Esophagus muscularis mucosa (tissue), 4 donors: ENCODE measurements at regions of chr12 and their contacts with region 1.

Region 1: GRCh38 chr12:51238510-51239334 is at the start of gene DAZAP2:
- DNase-seq: peak; percentile 99
- H3K4me3 ChIP-seq: peak within 1 kb of the TSS; percentile 74 to 96 (median 91)
- H3K27ac ChIP-seq: peak within 1 kb of the TSS; percentile 94 to 100 (median 99)
- H3K4me1 ChIP-seq: peaks cover 31 to 44% (median 40%) of the 10 kb centered on the region in 4 donors
- H3K27me3 ChIP-seq: no peaks in the 10 kb centered on the region
- CTCF ChIP-seq: peak in 2 of 3 experiments; percentile 12 to 42
- EP300 ChIP-seq: no peak
- POLR2A ChIP-seq: peak; percentile 94
- total RNA-seq, gene DAZAP2: 247 to 451 (median 356) TPM

Region 2: GRCh38 chr12:50862316-50862715 is 376.4 kb before region 1 on chr12:
- intact Hi-C with region 1: no loop called
- DNase-seq: no peak
- H3K4me3 ChIP-seq: no peak overlapping the region
- H3K27ac ChIP-seq: no peak overlapping the region
- H3K4me1 ChIP-seq: no peaks in the 10 kb centered on the region
- H3K27me3 ChIP-seq: no peaks in the 10 kb centered on the region
- CTCF ChIP-seq: no peak
- EP300 ChIP-seq: no peak
- POLR2A ChIP-seq: no peak

Region 3: DNA sequence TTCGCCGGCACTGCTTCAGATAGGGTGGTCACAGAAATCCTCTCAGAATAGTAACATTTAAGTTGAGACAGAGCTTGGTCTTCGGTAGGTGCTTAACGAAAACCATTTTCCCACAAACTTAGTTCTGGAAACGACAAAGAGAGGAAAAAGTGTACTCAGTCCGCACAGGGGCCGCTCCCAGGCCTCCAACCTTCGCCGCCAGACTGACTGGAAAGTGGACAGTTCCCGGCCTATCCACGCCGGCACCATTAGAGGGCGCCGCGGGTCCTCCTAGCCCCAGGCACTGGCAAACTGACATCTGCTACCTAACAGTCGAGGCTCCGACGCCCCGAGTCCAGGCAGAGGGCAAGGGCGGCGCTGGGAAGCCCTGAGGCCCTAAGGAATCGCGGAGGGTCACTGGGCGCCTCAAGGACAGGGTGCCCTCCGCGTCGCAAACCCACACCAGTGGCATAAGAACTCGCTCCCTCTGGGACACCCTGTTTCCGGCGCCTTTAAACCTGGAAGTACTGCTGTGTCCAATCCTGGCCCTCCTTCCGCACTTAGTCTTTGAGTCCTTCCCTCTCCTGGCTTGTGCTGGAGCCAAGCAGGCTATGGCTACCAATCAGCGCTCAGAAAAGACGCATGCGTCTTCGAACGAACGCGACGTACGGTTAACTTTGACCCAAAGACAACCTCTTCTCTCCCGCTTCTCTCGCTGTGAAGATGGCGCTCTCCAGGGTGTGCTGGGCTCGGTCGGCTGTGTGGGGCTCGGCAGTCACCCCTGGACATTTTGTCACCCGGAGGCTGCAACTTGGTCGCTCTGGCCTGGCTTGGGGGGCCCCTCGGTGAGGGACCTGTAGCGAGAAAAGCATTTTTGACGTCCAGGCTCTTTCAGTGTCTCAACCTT is 190.8 kb before region 1 on chr12 and contains the start of gene LETMD1:
- intact Hi-C with region 1: loop called (anchors 5 kb)
- DNase-seq: peak; percentile 98
- H3K4me3 ChIP-seq: peak within 1 kb of the TSS; percentile 64 to 78 (median 76)
- H3K27ac ChIP-seq: peak within 1 kb of the TSS; percentile 91 to 97 (median 93)
- H3K4me1 ChIP-seq: peaks cover 18 to 30% (median 26%) of the 10 kb centered on the region in 4 donors
- H3K27me3 ChIP-seq: no peaks in the 10 kb centered on the region
- CTCF ChIP-seq: peak; percentile 93 to 95 (median 94)
- EP300 ChIP-seq: no peak
- POLR2A ChIP-seq: peak; percentile 28
- total RNA-seq, gene LETMD1: 35.6 to 43.2 (median 42.1) TPM

Region 4: GRCh38 chr12:51103977-51104376 is 134.7 kb before region 1 on chr12:
- intact Hi-C with region 1: no loop called
- DNase-seq: no peak
- H3K4me3 ChIP-seq: no peak overlapping the region
- H3K27ac ChIP-seq: no peak overlapping the region
- H3K4me1 ChIP-seq: no peaks in the 10 kb centered on the region
- H3K27me3 ChIP-seq: no peaks in the 10 kb centered on the region
- CTCF ChIP-seq: no peak
- EP300 ChIP-seq: no peak
- POLR2A ChIP-seq: no peak

Region 5: DNA sequence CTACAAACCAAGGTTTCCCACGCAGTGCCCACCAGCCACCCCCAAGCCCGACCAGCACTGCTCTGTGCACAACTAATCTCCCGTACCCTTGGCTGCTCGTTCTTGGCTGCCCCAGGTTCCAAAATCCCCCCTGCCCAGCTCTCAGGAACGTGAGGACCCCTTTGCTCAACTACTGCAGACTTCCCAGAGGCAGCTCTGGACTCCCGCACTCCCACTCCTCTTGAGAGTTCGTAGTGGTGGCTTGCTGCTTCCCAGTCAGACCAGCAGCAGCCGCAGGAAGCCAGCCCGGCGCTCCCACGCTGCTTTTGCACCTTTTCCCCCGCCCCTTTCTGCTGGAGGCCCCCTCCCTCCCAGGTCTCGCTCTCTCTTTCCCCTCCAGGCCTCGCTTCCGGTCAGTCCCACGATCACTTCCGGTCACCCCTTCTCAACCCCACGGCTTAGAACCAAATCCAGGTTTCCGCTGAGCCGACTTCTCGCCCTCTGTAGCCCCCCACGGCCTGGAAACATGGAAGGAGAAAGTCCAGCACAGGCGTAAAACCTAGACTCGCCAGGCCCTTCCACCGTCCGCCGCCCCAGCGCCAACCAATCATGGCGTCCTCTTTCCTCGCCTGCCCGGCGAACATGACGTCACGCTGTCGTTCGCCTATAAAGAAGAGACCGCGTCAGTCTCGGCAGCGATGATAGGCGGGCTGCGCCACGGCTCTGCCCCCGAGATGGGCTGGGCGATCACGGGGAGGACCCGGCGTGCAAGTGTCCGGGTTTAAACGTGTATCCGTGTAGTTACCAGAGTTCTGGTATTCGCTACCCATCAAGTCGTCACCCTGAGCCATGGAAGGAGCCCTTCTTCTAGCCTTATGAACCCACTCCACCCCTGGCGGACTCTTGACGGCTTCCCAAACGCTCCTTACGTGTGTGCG is 65.9 kb before region 1 on chr12 and contains the start of gene TFCP2:
- intact Hi-C with region 1: loop called (anchors 5 kb)
- DNase-seq: peak; percentile 99
- H3K4me3 ChIP-seq: peak within 1 kb of the TSS; percentile 64 to 90 (median 74)
- H3K27ac ChIP-seq: peak within 1 kb of the TSS; percentile 93 to 98 (median 95)
- H3K4me1 ChIP-seq: peaks cover 15 to 37% (median 29%) of the 10 kb centered on the region in 4 donors
- H3K27me3 ChIP-seq: no peaks in the 10 kb centered on the region
- CTCF ChIP-seq: no peak
- EP300 ChIP-seq: peak; percentile 13
- POLR2A ChIP-seq: peak; percentile 35
- total RNA-seq, gene TFCP2: 11.3 to 16.2 (median 15.2) TPM

Region 6: DNA sequence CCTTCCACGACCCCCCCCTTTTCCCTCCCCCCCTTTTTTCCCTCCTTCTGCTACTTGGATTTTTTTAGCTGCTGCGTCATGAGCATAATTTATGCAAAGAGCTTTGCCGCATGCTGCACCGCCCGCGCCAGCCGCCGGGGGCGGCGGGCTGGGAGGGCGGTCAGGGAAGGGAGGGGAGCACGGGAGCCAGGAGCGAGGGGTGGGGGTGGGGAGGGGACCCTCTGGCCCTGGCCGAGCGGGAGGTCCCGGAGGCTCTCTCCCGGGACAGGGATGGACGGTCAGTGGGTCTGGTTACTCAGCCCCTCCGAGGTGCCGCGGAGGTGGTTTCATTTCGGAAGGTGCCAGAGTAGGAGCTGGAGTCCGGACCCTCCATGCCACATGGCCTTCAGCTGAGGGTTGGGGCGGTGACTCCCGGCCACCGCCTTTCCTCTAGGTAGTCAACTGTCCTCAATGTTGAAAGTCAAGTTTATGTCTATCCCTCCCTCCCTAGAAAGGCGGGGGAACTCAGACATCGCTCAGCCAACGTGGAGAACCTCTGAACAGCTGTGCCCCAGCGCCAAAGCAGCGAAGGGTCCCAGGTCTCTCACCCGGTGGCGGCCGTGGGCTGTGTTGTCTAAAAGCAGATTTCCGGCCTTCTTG is 20.6 kb before region 1 on chr12 and contains the start of gene POU6F1:
- intact Hi-C with region 1: loop called (anchors 2 kb)
- DNase-seq: peak; percentile 93
- H3K4me3 ChIP-seq: peak within 1 kb of the TSS; percentile 80 to 98 (median 96)
- H3K27ac ChIP-seq: peak within 1 kb of the TSS; percentile 97 to 100 (median 99)
- H3K4me1 ChIP-seq: peaks cover 17 to 29% (median 25%) of the 10 kb centered on the region in 4 donors
- H3K27me3 ChIP-seq: no peaks in the 10 kb centered on the region
- CTCF ChIP-seq: peak; percentile 49 to 83 (median 49)
- EP300 ChIP-seq: no peak
- POLR2A ChIP-seq: no peak
- total RNA-seq, gene POU6F1: 13.3 to 27.2 (median 16.9) TPM

Region 7: GRCh38 chr12:51307655-51308593 is 69.2 kb after region 1 on chr12:
- intact Hi-C with region 1: no loop called
- DNase-seq: no peak
- H3K4me3 ChIP-seq: no peak overlapping the region
- H3K27ac ChIP-seq: no peak overlapping the region
- H3K4me1 ChIP-seq: no peaks in the 10 kb centered on the region
- H3K27me3 ChIP-seq: no peaks in the 10 kb centered on the region
- CTCF ChIP-seq: no peak
- EP300 ChIP-seq: no peak
- POLR2A ChIP-seq: no peak

Region 8: DNA sequence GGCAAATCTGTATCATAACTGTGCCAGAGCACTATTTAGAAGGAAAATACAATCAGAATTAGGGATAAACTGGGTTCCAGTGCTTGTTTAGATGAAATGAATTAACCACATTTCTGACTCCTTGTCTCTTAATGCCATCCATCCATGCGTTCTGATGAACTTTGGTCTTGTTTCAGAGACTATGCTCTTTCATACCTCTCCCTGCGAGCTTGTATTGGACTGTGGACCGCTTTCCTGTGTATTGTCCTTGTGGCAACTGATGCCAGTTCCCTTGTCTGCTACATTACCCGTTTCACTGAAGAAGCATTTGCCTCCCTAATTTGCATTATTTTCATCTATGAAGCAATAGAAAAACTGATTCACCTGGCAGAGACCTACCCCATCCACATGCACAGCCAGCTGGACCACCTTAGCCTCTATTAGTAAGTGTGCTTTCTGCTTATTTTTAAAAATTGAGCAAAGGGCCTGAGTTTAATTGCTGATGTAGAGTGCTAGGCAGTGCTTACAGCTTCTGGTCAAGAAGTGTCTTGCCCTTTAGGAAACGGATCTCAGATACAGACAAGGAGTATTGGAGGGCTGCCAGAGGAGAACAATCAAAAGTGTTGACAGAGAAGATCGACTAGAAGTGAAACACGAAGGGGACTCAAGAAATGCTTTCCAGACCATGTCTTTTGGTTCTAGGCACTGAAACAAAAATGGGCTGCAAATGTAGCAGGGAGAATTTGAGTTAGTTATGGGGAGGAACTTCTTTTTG is 232.6 kb after region 1 on chr12:
- intact Hi-C with region 1: no loop called
- DNase-seq: no peak
- H3K4me3 ChIP-seq: no peak overlapping the region
- H3K27ac ChIP-seq: no peak overlapping the region
- H3K4me1 ChIP-seq: no peaks in the 10 kb centered on the region
- H3K27me3 ChIP-seq: no peaks in the 10 kb centered on the region
- CTCF ChIP-seq: no peak
- EP300 ChIP-seq: no peak
- POLR2A ChIP-seq: no peak